Vagina (tissue), 2 donors: ENCODE measurements at regions of chr17 and their contacts with region 1.

Region 1: DNA sequence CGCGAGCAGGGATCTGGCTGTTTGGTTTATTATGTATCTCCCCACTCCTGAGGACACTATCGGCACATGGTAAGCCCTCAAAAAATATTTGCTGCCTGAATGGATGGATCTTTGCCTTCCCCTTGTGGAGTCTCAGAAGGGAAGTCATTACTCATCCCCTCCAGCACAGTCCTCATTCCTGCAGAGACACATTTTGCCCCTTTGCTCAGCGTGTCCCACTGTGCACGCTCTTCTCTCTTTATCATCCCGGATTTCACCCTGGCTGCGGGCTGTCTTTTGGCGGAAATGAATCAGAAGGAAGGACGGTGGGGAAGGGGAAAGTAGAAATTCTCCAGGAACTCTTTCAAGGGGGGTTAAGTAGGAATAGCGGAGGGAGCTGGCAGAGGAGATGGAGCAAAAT is 125.2 kb upstream of the CDC42EP4 start:
- DNase-seq: no peak
- H3K4me3 ChIP-seq: no peak overlapping the region
- H3K27ac ChIP-seq: no peak overlapping the region
- H3K4me1 ChIP-seq: no peaks in the 10 kb centered on the region
- H3K27me3 ChIP-seq: no peaks in the 10 kb centered on the region
- CTCF ChIP-seq: no peak
- POLR2A ChIP-seq: no peak

Region 2: GRCh38 chr17:73471924-73472323 is 35.0 kb after region 1 on chr17:
- intact Hi-C with region 1: loop called (anchors 1 kb)
- DNase-seq: no peak
- H3K4me3 ChIP-seq: no peak overlapping the region
- H3K27ac ChIP-seq: no peak overlapping the region
- H3K4me1 ChIP-seq: peaks cover 8% of the 10 kb centered on the region
- H3K27me3 ChIP-seq: no peaks in the 10 kb centered on the region
- CTCF ChIP-seq: no peak
- POLR2A ChIP-seq: no peak